Activated CD8-positive, alpha-beta T cell treated with anti-CD3 and anti-CD28 coated beads, Interleukin-2, amount 10 ng/mL, durations not matched to agents 7 days and 5 days (primary cell): ENCODE measurements at regions of chr17 and their contacts with region 1.

Region 1: DNA sequence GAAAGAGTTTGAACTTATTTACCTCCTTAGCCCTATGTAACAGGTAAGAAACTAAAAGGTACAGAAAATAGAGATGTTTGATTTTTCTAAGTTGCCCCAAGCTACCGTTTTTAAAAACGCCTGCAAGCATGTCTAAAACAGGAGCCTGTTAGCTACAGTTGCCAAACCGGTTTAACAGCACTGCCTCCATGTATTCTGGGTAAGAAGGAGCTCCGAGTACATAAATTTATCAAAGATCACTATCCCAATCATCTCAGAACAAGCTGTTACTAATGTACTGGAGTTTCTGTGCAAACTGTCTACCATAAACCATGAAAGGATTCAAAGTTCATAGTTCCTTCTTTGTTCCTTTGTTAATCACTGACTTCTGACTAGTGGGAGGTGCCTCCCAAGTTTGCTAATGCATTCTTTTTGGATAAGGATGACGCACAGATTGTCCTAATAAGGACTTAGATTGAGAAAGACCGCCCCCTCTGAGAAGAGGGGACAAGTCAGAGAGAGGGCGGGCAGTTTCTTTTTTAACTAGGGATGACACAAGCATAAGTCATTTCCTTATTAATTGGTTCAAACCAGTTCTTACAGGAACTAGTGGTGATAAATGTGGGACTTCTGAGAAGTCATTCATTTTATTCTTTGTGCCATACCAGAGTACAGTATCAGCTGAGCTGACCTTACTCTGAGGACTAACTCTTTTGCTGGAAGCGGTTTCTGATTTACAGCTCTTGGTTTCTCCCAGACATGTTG is 55.3 kb downstream of the TUBD1 start:
- DNase-seq: peak; percentile 87
- ATAC-seq: peak; percentile 90
- H3K4me3 Mint-ChIP-seq: peak overlapping the region; percentile 93
- H3K27ac Mint-ChIP-seq: peak overlapping the region; percentile 98
- H3K4me1 Mint-ChIP-seq: peaks cover 45% of the 10 kb centered on the region
- H3K27me3 Mint-ChIP-seq: no peaks in the 10 kb centered on the region

Region 2: DNA sequence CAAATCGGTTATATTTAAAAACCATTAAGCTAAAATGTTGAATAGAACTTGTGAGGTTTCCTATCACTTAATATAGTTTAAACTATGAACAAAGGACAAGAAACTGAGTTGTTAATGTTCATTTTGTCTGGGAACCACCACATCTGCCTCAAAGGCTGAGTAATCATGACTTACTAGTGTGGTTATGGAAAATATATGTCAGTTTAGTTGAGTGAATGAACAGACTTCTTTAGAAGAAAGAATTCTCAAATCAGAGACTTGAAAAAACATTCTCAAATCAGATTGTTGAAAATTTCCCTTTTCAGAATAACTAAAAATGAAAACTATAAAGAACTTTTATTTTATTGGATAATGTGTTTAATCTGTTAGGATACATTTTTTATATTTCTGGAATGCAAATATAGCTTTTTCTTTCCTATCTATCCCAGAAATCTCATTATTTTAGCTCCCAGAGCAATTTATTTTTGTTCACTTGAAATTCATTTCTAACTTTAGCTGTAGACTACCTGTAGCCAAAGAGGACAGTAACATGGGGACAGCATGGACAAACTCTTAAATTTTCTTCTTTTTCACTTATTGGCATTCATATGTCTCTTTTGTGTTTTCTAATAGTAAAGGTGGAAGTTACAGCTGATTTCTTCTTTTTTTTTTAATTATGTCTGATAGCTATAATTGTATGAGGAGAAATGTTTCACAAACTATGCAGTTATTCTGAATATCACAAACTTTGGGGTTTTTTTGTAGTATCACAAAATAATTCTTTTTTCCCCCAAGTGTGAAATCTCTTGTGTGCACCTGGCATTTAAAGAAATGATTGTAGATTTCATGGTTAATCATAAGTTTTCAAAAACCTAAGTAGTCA is 74.7 kb before region 1 on chr17:
- CTCF ChIA-PET with region 1: no interaction called
- POLR2A ChIA-PET with region 1: interaction called, 81 read pairs
- DNase-seq: no peak
- ATAC-seq: peak; percentile 73
- H3K4me3 Mint-ChIP-seq: no peak overlapping the region
- H3K27ac Mint-ChIP-seq: peak overlapping the region; percentile 62
- H3K4me1 Mint-ChIP-seq: peaks cover 42% of the 10 kb centered on the region
- H3K27me3 Mint-ChIP-seq: no peaks in the 10 kb centered on the region

Region 3: GRCh38 chr17:59786536-59787319 is 50.8 kb before region 1 on chr17:
- CTCF ChIA-PET with region 1: interaction called, 79 read pairs
- POLR2A ChIA-PET with region 1: interaction called, 406 read pairs
- DNase-seq: peak; percentile 92
- ATAC-seq: peak; percentile 89
- H3K4me3 Mint-ChIP-seq: peak overlapping the region; percentile 76
- H3K27ac Mint-ChIP-seq: peak overlapping the region; percentile 97
- H3K4me1 Mint-ChIP-seq: peaks cover 65% of the 10 kb centered on the region
- H3K27me3 Mint-ChIP-seq: no peaks in the 10 kb centered on the region

Region 4: DNA sequence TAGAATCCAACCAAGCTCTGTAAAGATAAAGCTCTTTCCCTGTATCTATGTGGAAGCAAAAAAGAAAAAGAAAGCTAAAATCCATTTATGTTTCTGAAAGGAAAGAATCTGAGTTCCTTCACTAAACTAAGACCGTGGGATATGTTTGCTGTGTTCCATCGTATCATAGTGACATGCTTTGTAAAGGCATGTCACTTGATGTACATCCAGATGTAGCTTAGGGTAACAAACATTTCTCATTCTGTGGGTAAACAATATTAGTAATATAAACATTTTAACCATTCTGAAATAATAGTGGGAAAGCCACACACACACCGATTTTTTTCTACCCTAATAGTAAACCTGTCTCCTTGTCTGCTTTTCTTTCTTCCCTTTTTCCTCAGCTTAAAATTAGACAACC is 22.8 kb before region 1 on chr17:
- CTCF ChIA-PET with region 1: no interaction called
- POLR2A ChIA-PET with region 1: no interaction called
- DNase-seq: peak; percentile 9
- ATAC-seq: no peak
- H3K4me3 Mint-ChIP-seq: no peak overlapping the region
- H3K27ac Mint-ChIP-seq: no peak overlapping the region
- H3K4me1 Mint-ChIP-seq: peaks cover 26% of the 10 kb centered on the region
- H3K27me3 Mint-ChIP-seq: no peaks in the 10 kb centered on the region

Region 5: DNA sequence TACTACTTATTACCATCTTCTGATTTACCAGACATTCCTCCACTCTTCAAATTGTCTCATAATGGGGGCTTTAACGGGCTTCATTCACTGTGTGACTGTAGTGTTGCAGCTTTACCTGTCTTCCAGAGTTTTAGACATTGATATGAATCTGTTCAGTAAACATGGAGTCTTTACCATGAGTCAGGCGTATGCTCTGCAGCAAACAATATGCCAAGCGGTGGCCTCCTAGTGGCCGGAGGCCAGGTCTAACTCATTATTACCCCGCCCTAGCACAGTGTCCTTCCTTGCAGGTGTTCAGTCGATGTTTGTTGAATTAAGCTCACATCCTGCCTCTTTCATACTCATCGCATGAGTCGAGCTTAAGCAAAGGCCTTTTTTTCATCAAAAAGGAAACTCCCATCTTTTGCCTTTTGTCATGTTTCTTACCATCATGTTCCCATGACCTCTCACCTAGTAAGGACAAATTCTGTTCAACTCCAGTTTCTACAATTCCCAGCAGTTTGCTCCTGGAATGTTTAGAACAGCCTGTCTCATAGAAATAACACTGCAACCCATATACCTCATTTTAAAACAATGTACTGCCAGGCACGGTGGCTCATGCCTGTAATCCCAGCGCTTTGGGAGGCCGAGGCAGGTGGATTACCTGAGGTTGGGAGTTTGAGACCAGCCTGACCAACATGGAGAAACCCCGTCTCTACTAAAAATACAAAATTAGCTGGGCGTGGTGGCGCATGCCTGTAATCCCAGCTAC is 15.9 kb after region 1 on chr17:
- CTCF ChIA-PET with region 1: interaction called, 12 read pairs
- POLR2A ChIA-PET with region 1: interaction called, 89 read pairs
- DNase-seq: peak; percentile 61
- ATAC-seq: peak; percentile 67
- H3K4me3 Mint-ChIP-seq: no peak overlapping the region
- H3K27ac Mint-ChIP-seq: peak overlapping the region; percentile 40
- H3K4me1 Mint-ChIP-seq: peaks cover 42% of the 10 kb centered on the region
- H3K27me3 Mint-ChIP-seq: no peaks in the 10 kb centered on the region

Region 6: DNA sequence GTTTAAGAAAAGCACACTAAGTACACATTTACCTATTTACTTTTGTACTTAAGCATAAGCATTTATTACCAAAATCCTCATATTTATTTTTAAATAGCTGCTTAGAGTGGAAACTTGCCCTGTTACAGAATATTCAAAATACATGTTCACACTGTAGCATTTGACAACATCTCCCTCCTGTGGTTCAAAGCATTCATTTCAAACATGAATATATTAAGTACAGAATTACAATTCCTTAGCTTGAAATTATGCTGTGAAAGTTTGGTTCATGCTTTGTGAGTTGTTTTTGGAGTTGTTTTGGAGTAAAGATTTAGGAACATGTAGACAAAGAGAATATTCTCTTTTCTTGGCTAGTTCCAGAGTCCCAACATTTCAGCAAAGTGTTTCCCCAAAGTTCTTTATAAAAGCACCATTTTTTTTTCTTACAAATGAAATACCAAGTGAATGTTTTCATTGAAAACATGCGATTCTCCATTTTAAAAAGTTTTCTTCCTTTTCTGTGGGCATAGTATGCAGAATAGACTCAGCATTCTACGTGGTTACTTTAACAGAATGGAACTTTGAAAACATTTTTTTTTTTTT is 22.1 kb after region 1 on chr17:
- CTCF ChIA-PET with region 1: interaction called, 12 read pairs
- POLR2A ChIA-PET with region 1: interaction called, 89 read pairs
- DNase-seq: no peak
- ATAC-seq: peak; percentile 63
- H3K4me3 Mint-ChIP-seq: no peak overlapping the region
- H3K27ac Mint-ChIP-seq: no peak overlapping the region
- H3K4me1 Mint-ChIP-seq: peaks cover 16% of the 10 kb centered on the region
- H3K27me3 Mint-ChIP-seq: no peaks in the 10 kb centered on the region

Region 7: GRCh38 chr17:59892924-59893676 is 55.6 kb after region 1 on chr17 and contains the starts of genes RPS6KB1 and TUBD1:
- CTCF ChIA-PET with region 1: no interaction called
- POLR2A ChIA-PET with region 1: interaction called, 11 read pairs
- DNase-seq: peak; percentile 99
- ATAC-seq: peak; percentile 96
- H3K4me3 Mint-ChIP-seq: peak within 1 kb of the TSS; percentile 100
- H3K27ac Mint-ChIP-seq: peak within 1 kb of the TSS; percentile 99
- H3K4me1 Mint-ChIP-seq: peaks cover 49% of the 10 kb centered on the region
- H3K27me3 Mint-ChIP-seq: no peaks in the 10 kb centered on the region
- total RNA-seq, gene RPS6KB1: 47.5 to 48.7 TPM
- total RNA-seq, gene TUBD1: 14.5 to 14.7 TPM